Ascending aorta (tissue), 2 donors: ENCODE measurements at regions of chr6 and their contacts with region 1.

Region 1: DNA sequence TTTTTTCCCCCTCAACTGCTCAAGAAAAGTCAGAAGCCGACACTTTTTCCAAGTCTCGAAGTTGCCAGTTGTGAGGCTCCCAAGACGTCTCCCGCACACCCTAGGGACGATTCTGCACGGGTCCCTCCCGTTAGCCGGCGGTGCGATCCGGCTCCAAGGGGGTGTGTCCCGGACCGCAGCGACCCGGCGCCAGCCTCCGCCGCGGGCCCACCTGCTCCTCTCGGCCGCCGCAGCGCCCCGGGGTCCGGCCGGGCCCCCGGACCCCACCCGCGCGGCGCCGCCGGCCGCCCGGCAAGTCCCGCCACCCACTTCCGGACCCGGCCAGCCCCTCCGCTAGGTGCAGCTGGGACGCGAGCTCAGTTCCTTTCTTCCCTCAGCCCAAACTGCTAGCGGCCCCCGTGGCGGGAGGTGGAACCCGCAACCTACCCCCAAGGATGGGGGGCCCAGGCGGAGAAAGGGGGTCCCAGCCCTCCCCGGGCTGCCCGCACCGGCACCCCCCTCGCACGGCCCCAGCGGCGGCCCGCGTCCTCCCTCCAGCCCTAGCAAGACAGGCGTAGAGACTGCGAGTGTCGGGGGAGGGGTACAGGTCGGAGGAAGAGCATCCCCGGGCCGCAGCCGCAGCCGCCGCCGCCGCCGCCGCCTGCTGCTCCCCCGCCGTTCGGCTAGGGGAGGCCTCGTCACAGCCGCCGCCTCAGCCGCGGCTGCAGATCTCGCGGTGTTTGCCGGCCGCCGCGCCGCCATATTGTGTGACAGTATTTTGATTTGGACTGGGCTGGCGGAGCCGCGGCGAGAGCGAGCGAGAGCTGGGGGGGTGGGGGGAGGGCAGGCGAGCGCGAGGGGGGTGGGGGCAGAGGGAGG is 485 bp upstream of the TAB2 start:
- DNase-seq: peak; percentile 70 to 95
- H3K4me3 ChIP-seq: peak overlapping the region; percentile 72 to 86
- H3K27ac ChIP-seq: peak overlapping the region; percentile 95 to 99
- H3K4me1 ChIP-seq: peaks cover 0 to 5% of the 10 kb centered on the region in 2 donors
- H3K27me3 ChIP-seq: no peaks in the 10 kb centered on the region
- CTCF ChIP-seq: no peak

Region 2: GRCh38 chr6:149335924-149336608 is 19.0 kb after region 1 on chr6:
- intact Hi-C with region 1: loop called (anchors 2 kb)
- DNase-seq: no peak
- H3K4me3 ChIP-seq: no peak overlapping the region
- H3K27ac ChIP-seq: peak overlapping the region; percentile 5 to 58
- H3K4me1 ChIP-seq: peaks cover 16 to 59% of the 10 kb centered on the region in 2 donors
- H3K27me3 ChIP-seq: no peaks in the 10 kb centered on the region
- CTCF ChIP-seq: no peak

Region 3: DNA sequence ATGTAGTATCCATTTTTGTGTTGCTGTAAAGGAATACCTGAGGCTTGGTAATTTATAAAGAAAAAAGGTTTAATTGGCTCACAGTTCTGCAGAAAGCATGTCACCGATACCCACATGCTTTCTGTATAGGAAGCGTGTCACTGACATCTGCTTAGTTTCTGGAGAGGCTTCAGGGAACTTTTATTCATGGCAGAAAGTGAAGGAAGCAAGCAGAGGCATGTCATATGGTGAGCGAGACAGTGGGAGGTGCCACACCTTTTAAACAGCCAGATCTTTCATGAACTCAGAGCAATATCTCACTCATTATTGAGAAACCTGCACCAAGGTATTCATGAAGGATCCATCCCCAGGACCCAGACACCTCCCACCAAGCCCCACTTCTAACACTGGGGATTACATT is 86.5 kb after region 1 on chr6:
- intact Hi-C with region 1: loop called (anchors 5 kb)
- DNase-seq: no peak
- H3K4me3 ChIP-seq: no peak overlapping the region
- H3K27ac ChIP-seq: no peak overlapping the region
- H3K4me1 ChIP-seq: no peaks in the 10 kb centered on the region
- H3K27me3 ChIP-seq: no peaks in the 10 kb centered on the region
- CTCF ChIP-seq: no peak

Region 4: DNA sequence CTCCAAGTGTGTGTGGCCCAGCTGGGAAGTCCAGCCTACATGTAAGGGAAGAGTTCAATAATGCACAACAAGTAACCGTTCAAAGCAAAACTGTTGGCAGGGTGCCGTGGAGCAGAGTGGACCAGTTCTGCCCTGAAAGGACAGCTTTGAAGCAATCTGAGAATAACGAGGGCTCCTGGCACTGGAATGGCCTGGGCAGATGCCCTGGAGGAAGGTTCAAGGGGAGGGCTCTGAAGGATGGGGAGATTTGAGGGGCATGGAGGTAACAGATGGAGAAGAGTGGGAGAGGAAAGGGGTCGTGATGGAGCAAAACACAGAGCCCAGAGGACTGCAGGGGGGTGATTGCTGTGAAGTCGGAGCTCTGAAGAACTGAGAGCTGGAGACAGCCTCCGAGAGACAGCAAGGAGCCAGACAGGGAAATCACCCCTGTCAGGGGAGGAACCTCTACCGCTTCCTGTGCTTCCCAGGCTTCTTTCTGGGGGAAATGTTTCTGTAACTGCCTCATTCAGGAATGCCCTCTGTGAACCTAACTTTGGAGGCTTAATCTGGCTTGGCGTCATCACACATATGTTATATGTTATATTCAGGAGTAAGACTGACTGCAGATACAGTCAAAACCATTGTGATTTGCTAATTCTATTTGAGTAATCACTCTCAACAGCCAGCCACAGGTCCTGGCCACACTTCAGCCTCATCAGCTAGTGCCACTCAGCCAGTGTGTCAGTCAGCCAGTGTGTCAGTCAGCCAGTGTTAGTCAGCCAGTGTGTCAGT is 126.6 kb after region 1 on chr6:
- intact Hi-C with region 1: no loop called
- DNase-seq: peak in 1 of 2 donors; percentile 50
- H3K4me3 ChIP-seq: no peak overlapping the region
- H3K27ac ChIP-seq: no peak overlapping the region
- H3K4me1 ChIP-seq: no peaks in the 10 kb centered on the region
- H3K27me3 ChIP-seq: no peaks in the 10 kb centered on the region
- CTCF ChIP-seq: no peak

Region 5: GRCh38 chr6:149545754-149546528 is 228.9 kb after region 1 on chr6 and contains the start of gene PPIL4:
- intact Hi-C with region 1: loop called (anchors 10 kb)
- DNase-seq: peak; percentile 87 to 98
- H3K4me3 ChIP-seq: peak within 1 kb of the TSS; percentile 72 to 84
- H3K27ac ChIP-seq: peak within 1 kb of the TSS; percentile 88 to 98
- H3K4me1 ChIP-seq: peaks cover 4 to 25% of the 10 kb centered on the region in 2 donors
- H3K27me3 ChIP-seq: no peaks in the 10 kb centered on the region
- CTCF ChIP-seq: peak; percentile 61 to 70 (median 70)
- total RNA-seq, gene PPIL4: 8.9 TPM